Activated CD4-positive, alpha-beta T cell treated with anti-CD3 and anti-CD28 coated beads for 36 hours (primary cell): ENCODE measurements at regions of chr15 and their contacts with region 1.

Region 1: GRCh38 chr15:72375847-72376581 is at the start of gene HEXA:
- DNase-seq: peak; percentile 99
- ATAC-seq: peak; percentile 83
- H3K4me3 Mint-ChIP-seq: peak within 1 kb of the TSS; percentile 89
- H3K27ac Mint-ChIP-seq: peak within 1 kb of the TSS; percentile 96
- H3K4me1 Mint-ChIP-seq: peaks cover 45% of the 10 kb centered on the region
- H3K27me3 Mint-ChIP-seq: no peaks in the 10 kb centered on the region
- total RNA-seq, gene HEXA: 38.8 to 54.2 TPM

Region 2: DNA sequence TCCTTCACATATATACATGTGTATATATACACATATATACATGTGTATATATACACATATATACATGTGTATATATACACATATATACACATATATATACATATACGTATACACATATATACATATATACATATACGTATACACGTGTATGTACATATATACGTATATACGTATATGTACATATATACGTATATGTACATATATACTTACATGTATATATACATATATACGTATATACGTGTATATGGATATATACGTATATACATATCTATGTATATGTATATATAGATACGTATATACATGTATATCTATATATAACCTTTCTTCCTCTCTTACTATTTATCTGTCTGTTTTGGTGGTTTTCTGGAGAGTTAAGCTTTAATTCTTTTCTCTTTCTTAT is 450.9 kb before region 1 on chr15:
- CTCF ChIA-PET with region 1: no interaction called
- POLR2A ChIA-PET with region 1: no interaction called
- intact Hi-C with region 1: no loop called
- DNase-seq: no peak
- ATAC-seq: no peak
- H3K4me3 Mint-ChIP-seq: no peak overlapping the region
- H3K27ac Mint-ChIP-seq: no peak overlapping the region
- H3K4me1 Mint-ChIP-seq: no peaks in the 10 kb centered on the region
- H3K27me3 Mint-ChIP-seq: no peaks in the 10 kb centered on the region

Region 3: DNA sequence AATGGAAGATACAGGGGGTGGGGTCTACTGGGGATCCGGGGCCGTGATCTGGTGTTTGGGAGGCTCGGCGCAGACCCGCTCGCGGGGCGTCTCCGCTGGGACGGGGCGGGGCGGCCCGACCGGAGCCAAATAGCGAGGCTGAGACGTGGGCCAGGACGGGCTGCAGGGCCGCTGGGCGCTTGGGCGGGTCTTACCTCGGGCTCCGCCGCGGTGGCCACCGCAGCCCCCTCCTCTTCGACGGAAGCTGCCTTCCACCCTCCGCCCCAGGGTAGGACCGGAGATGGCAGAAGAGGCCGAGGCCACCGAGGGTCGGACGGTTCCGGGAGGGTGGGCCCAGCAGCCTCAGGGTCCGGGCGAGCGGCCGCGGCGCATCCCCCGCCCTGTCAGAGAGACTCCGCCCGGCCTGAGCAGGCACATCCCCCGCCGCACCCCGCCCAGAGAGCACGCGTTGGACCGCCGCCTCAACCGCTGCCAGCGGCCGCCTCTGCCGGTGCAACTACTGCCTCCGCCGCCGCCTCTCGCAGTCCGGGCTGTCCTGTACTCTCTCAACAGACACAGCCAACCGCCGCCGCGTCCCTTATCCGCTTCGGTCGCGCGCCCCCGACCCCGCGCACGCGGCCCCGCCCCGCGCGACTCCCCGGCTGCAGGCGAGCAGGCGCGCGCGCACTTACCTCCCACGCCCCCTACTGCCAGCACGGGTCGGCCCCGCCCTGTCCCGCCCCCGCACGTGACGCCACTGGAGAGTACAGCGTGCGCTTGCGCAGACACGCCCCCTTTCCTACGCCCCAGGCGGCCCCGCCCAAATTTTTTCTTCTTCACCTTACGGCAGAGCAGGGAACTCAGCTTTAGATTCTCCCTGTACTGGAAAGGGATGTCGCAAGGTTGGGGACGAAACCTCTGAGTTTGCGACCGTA is 258.3 kb before region 1 on chr15 and contains the start of gene MYO9A:
- CTCF ChIA-PET with region 1: no interaction called
- POLR2A ChIA-PET with region 1: no interaction called
- intact Hi-C with region 1: loop called in 1 of 2 experiments (anchors 1 kb)
- DNase-seq: peak; percentile 100
- ATAC-seq: peak; percentile 73
- H3K4me3 Mint-ChIP-seq: peak within 1 kb of the TSS; percentile 98
- H3K27ac Mint-ChIP-seq: peak within 1 kb of the TSS; percentile 96
- H3K4me1 Mint-ChIP-seq: peaks cover 40% of the 10 kb centered on the region
- H3K27me3 Mint-ChIP-seq: no peaks in the 10 kb centered on the region
- total RNA-seq, gene MYO9A: 19.0 to 20.3 TPM

Region 4: DNA sequence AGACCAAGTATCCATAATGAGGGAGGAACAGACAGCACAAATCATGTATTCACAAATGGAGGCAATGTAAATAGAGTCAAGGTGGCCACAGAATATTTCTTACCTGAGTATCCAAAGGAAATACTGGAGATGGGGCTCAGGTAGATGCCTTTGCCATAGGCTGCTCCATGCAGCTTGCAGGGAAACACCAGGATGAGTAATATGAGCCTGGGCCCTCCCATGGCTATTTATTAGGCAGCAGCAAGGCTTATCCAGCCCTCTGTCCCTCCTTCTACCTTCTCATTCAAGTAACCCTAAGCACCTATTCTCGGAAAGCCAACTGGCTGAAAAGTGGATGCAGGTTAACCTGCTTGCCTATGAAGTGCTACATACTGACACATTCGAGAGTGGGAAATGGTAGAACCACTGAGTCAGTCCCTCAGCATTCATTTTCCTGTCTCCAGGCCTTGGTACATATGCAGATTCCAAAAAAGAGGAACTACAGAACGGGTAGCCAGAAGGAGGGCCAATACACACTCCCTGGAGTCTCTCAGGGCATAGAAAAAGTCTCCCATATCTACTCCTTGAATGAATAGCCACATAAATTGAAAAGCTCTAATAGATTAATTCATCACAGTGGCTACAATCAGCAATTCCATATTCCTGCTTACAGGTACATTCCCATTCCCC is 126.7 kb before region 1 on chr15:
- CTCF ChIA-PET with region 1: no interaction called
- POLR2A ChIA-PET with region 1: no interaction called
- intact Hi-C with region 1: no loop called
- DNase-seq: no peak
- ATAC-seq: no peak
- H3K4me3 Mint-ChIP-seq: no peak overlapping the region
- H3K27ac Mint-ChIP-seq: no peak overlapping the region
- H3K4me1 Mint-ChIP-seq: no peaks in the 10 kb centered on the region
- H3K27me3 Mint-ChIP-seq: no peaks in the 10 kb centered on the region

Region 5: DNA sequence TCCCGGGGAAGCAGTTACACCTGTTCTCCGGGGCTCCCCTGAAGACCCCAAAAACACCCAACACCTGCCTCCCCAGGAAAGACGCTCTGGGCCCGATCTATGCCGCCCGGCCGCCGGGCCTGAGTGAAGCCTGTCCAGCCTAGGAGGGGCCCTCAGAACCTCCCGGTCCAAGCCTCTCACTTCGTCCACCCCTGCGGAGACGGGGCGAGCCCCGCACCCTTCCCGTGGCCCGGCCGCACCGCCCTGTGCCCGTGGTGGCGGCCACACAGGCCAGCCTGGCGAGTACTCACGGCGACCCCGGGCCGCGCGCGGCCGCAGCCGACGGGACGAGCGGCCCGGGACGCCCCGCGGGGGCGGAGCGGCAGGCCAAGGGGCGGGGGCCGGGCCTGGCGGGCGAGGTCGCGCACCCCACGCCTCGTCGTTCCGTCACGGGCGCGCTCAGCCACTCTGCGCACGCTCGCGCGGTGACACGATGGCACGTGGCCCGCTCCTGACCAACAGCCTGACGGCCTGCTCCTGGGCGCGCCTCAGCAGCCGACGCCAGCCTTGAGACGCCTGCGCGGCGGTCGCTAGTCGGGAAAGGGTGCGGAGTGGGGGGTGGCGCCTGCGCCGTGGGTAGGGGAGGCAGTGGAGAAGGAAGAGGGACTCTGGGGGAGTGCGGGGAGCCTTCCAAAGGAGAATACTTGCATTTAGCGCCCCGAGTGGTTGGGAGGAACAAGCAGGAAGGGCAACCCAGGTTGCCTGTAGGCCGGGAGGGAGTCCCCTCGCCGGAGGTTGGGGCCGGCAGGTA is 103.6 kb before region 1 on chr15 and contains the start of gene PARP6:
- CTCF ChIA-PET with region 1: interaction called, 4 read pairs
- POLR2A ChIA-PET with region 1: no interaction called
- intact Hi-C with region 1: loop called in 1 of 2 experiments (anchors 1 kb)
- DNase-seq: peak; percentile 99
- ATAC-seq: peak; percentile 98
- H3K4me3 Mint-ChIP-seq: peak within 1 kb of the TSS; percentile 80
- H3K27ac Mint-ChIP-seq: peak within 1 kb of the TSS; percentile 92
- H3K4me1 Mint-ChIP-seq: peaks cover 35% of the 10 kb centered on the region
- H3K27me3 Mint-ChIP-seq: no peaks in the 10 kb centered on the region
- total RNA-seq, gene PARP6: 41.4 to 58.2 TPM

Region 6: DNA sequence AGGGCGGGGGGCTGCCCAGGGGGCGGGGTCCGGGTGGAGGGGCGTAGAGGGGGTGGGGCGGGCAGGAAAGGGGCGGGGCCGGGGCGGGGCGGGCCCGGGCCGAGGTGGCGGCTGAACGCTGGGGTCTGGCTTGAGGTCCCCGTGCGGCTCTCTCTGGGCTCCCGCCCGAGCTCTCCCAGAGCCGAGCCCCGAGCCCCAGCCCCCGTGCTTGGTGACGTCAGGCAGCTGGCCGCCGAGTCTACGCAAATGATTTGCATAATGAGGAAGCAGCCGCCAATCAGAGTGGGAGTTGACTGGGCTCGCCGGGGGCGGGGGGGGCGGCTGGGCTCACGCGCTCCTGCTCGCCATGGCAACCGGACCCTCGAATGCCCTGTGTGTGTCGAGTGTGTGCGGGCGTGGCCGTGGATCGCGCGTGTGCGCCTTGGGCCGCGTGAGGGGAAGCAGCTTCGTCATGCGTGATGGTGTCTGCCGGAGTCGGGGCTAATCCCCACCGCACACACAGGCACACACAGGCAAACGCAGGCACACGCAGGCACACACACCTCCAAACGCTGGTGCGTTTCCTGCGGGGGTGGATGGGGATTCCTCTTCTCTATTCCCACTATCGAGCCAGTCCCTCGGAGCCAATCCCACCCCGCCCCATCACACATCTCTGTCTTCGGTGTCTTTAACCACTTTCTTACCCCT is 55.9 kb before region 1 on chr15 and contains the start of gene CELF6:
- CTCF ChIA-PET with region 1: no interaction called
- POLR2A ChIA-PET with region 1: no interaction called
- intact Hi-C with region 1: loop called (anchors 1 to 5 kb)
- DNase-seq: peak; percentile 84
- ATAC-seq: peak; percentile 78
- H3K4me3 Mint-ChIP-seq: peak within 1 kb of the TSS; percentile 71
- H3K27ac Mint-ChIP-seq: peak within 1 kb of the TSS; percentile 21
- H3K4me1 Mint-ChIP-seq: peaks cover 15% of the 10 kb centered on the region
- H3K27me3 Mint-ChIP-seq: peaks cover 8% of the 10 kb centered on the region
- total RNA-seq, gene CELF6: 0.37 to 0.40 TPM

Region 7: DNA sequence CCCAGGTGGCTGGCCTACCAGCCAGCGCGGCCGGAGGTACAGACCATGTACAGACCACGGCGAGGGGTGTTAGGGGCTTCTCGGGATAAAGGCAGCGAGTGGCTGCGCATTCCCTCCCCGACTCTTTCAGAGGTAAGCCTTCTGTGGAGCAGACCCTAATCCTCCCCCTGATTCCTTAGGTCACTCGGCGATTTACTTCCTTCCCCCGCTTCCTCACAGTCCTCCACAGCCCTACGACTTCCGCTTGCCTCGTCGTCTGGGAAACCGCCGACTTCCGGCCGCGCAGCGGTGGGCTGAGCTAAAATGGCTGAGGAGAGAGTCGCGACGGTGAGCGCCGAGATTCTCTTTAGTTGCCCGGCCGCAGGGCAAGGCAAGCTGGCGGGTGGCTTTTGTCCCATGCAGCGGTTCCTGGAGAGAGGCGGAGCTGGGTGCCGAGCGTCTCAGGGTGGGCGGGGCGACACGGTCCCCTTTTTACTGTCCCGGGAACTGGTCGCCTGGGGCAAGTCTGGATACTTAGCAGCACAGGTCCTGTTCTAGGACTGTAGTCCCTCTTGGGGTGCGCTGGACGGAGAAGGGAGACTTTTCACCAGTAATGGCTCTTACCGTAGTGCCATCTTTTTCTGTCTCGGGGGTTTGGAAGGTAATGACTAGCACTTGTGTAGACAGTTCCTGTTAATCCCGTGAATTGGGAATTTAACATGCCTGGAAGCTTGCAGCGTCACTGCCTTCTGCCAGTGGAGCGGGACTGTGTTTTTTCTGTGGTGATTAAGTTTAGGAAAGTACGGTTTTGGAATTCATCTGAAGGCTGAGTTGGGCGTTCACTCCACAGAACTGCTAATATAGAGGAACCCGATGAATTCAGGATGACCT is 310.1 kb after region 1 on chr15 and contains the starts of genes BBS4 and HIGD2B:
- CTCF ChIA-PET with region 1: no interaction called
- POLR2A ChIA-PET with region 1: no interaction called
- intact Hi-C with region 1: loop called in 1 of 2 experiments (anchors 2 kb)
- DNase-seq: peak; percentile 93
- ATAC-seq: peak; percentile 96
- H3K4me3 Mint-ChIP-seq: peak within 1 kb of the TSS; percentile 89
- H3K27ac Mint-ChIP-seq: peak within 1 kb of the TSS; percentile 92
- H3K4me1 Mint-ChIP-seq: peaks cover 20% of the 10 kb centered on the region
- H3K27me3 Mint-ChIP-seq: no peaks in the 10 kb centered on the region
- total RNA-seq, gene BBS4: 13.7 to 14.9 TPM
- total RNA-seq, gene HIGD2B: not detected